SK-N-SH (cell line): ENCODE measurements at regions of chr11 and their contacts with region 1.

Region 1: DNA sequence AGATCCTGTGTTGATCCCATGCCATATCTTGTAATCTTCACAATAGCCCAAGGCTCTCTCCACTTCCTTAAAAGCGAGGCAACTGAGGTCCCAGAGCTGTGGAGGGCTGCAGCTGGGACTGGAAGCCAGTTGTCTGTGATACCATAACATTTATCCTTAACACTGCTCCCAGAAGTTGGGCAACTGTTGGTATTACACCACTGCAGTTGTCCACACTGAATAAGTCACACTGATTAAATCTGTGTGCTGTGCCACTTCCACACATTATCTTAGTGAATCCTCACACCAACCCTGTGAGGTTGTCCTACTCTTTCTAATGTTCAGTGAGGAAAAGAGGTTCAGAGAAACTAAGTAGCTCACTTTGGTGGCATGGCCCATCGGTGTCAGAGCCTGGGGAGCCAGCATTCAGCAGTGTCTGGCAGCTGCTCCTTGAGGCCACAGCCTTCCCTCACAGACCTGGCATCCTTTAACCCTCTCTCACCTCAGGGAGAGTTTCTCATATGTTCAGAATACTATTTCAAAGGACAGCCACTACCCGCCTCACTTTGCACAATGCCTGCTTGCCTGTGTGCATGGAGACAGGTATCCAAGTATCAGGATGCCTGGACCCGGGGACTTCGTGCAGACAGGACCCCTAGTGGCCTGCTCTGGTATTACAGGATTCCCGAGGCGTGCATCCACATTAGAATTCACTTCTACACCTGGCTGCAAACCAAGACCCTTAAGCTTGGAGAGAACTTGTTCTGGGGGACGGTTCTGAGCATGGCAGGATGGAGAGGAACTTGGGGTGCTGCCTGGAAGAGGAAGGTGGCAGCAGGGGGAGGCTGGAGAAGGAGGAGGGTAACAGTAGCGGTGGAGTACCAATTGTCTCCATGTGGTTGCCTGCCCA is 221.9 kb upstream of the TBCEL start:
- DNase-seq: peak; percentile 83
- H3K4me3 ChIP-seq: no peak overlapping the region; a peak in 1 of 4 replicates
- H3K27ac ChIP-seq: no peak overlapping the region
- H3K4me1 ChIP-seq: peaks cover 0 to 18% of the 10 kb centered on the region in 2 experiments; a peak in 1 of 4 replicates
- H3K27me3 ChIP-seq: no peaks in the 10 kb centered on the region
- CTCF ChIP-seq: peak; percentile 80
- EP300 ChIP-seq: no peak
- RAD21 ChIP-seq: peak; percentile 85

Region 2: GRCh38 chr11:120529214-120529613 is 272.8 kb before region 1 on chr11:
- CTCF ChIA-PET with region 1: no interaction called
- POLR2A ChIA-PET with region 1: no interaction called
- DNase-seq: no peak
- H3K4me3 ChIP-seq: no peak overlapping the region
- H3K27ac ChIP-seq: no peak overlapping the region
- H3K4me1 ChIP-seq: peaks cover 0 to 10% of the 10 kb centered on the region in 2 experiments; a peak in 1 of 4 replicates
- H3K27me3 ChIP-seq: peaks cover 10% of the 10 kb centered on the region
- CTCF ChIP-seq: no peak
- EP300 ChIP-seq: no peak
- RAD21 ChIP-seq: no peak

Region 3: GRCh38 chr11:120577041-120577440 is 225.0 kb before region 1 on chr11:
- CTCF ChIA-PET with region 1: no interaction called
- POLR2A ChIA-PET with region 1: no interaction called
- DNase-seq: no peak
- H3K4me3 ChIP-seq: no peak overlapping the region
- H3K27ac ChIP-seq: no peak overlapping the region
- H3K4me1 ChIP-seq: no peaks in the 10 kb centered on the region; a peak in 1 of 4 replicates
- H3K27me3 ChIP-seq: no peaks in the 10 kb centered on the region; the same call in 1 of the 2 replicates
- CTCF ChIP-seq: no peak
- EP300 ChIP-seq: no peak
- RAD21 ChIP-seq: no peak

Region 4: GRCh38 chr11:120710354-120711131 is 91.5 kb before region 1 on chr11:
- CTCF ChIA-PET with region 1: interaction called, 13 read pairs
- POLR2A ChIA-PET with region 1: no interaction called
- DNase-seq: peak; percentile 41
- H3K4me3 ChIP-seq: no peak overlapping the region
- H3K27ac ChIP-seq: no peak overlapping the region
- H3K4me1 ChIP-seq: peaks cover 0 to 17% of the 10 kb centered on the region in 2 experiments; a peak in 1 of 4 replicates
- H3K27me3 ChIP-seq: no peaks in the 10 kb centered on the region; the same call in 1 of the 2 replicates
- CTCF ChIP-seq: no peak
- EP300 ChIP-seq: no peak
- RAD21 ChIP-seq: no peak

Region 5: DNA sequence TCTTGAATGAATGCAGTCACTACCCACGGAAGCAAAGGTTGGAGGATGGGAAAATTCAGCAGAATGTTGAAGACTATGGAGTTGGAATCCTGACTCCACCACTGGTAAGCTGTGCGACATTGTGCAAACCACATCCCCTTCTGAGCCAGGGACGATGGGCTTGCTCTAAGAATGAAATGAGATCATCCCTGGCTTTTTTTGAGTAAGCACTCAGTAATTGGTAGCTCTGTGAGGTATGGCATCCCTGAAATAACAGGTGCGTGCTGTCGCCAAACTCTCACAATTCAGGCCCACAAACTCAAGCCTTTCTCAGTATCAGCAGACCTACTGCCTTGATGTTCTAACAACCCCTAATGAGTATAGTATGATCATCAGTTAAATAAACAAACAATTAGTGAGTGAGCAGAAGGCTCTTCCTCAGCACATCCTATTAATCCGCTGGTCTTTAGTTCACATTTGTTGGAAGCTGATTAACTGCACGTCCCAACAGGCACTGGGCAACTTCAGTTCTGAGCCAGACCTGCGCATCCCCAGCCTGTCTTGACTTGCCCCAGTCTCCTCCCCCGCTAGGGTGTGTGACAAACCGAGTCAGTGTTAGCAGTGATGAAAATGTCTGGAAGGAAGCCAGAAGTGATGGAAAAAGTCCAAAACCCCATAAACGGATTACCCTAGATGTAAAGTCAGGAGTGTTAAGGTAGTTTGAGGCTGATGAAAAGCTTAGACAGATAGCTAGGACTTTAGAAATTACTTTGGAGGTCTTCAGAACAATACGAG is 55.0 kb before region 1 on chr11:
- CTCF ChIA-PET with region 1: interaction called, 10 read pairs
- POLR2A ChIA-PET with region 1: no interaction called
- DNase-seq: peak; percentile 30
- H3K4me3 ChIP-seq: no peak overlapping the region
- H3K27ac ChIP-seq: peak overlapping the region in 1 of 2 experiments; percentile 18; a peak in 1 of 4 replicates
- H3K4me1 ChIP-seq: peaks cover 0 to 59% of the 10 kb centered on the region in 2 experiments; a peak in 3 of 4 replicates
- H3K27me3 ChIP-seq: no peaks in the 10 kb centered on the region
- CTCF ChIP-seq: no peak
- EP300 ChIP-seq: no peak
- RAD21 ChIP-seq: no peak

Region 6: DNA sequence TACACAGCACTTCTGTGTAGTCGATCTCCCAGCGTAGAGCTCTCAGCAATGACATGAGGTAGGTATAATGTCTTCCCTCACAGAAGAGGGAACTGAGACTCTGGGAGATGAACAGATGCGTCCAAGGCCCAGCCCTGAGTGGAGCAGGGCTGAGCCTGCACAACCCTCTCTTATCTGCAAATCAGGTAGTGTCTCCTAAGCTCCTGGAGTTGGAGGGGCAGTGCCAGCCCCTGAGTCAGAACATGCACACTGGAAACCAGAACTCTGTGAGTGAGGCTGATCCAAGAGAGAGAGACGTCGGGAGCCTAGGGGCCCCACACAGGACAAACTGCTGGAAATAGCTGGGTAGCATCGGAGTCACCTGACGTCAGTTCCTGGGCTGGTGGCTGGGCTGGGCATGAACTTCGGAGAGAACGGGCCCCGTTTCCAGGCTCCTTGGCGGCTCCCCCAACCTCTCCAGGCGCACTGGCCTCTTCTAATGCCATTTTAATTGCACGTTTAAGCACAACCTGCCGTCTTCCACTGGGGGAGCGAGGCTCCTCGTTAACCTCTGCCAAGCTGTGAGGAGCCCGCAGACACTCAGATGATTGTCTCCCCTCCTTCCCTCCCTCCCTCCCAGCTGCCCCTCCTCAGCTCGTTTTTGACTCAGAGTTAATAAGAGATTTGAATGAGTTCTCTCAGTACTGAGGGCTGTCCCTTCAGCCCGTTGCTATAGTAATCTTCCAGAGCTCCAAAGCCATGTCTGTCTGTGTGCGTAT is 30.6 kb after region 1 on chr11:
- CTCF ChIA-PET with region 1: interaction called, 13 read pairs
- POLR2A ChIA-PET with region 1: no interaction called
- DNase-seq: no peak
- H3K4me3 ChIP-seq: no peak overlapping the region
- H3K27ac ChIP-seq: no peak overlapping the region
- H3K4me1 ChIP-seq: peaks cover 0 to 29% of the 10 kb centered on the region in 2 experiments; a peak in 1 of 4 replicates
- H3K27me3 ChIP-seq: no peaks in the 10 kb centered on the region
- CTCF ChIP-seq: no peak
- EP300 ChIP-seq: no peak
- RAD21 ChIP-seq: no peak

Region 7: DNA sequence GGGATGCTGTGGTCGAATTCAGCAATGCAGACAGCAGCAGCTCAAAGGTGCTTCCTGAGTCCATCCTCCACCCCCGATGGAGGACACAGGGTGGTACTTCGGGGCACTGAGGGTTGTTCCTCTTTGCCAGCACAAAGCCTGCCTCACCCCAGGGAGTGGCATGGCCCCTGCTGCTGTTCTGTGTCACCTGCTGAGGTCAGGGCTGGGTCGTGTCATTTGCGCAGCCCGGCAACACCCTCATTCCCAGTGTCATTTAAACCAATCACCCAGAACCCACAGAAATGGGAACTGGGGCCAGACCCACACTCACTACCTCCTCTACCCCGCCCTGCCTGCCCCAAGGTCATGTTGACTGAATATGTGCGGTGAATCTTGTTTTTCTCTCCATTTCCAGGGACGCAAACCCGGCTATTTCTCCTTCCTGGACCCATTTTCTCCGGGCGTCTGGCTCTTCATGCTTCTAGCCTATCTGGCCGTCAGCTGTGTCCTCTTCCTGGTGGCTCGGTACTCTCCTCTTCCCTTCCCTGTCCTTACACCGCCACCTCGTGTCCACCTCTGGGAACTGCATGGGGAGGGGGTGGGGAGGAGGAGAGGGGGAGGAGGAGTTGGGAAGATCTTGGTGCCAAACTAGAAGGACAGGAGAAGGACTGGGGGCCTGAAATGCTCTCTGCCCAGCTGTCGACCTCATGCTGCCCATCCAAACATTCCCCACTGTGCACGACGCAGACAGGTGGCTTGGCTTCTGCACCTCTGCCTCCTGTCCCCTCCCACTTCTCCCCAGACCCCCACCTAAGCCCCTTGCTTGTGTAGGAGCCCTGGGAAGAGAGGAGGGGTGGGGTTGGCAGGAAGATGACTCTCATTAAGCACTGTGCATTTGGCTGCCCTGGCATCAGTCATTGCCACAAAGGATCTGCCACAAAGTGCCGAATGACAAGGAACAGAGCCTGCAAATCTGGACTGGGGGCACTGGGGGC is 150.7 kb after region 1 on chr11:
- CTCF ChIA-PET with region 1: interaction called, 10 read pairs
- POLR2A ChIA-PET with region 1: no interaction called
- DNase-seq: peak; percentile 89
- H3K4me3 ChIP-seq: peak overlapping the region in 1 of 2 experiments; percentile 54; a peak in 1 of 4 replicates
- H3K27ac ChIP-seq: peak overlapping the region in 1 of 2 experiments; percentile 62; a peak in 2 of 4 replicates
- H3K4me1 ChIP-seq: peaks cover 0 to 34% of the 10 kb centered on the region in 2 experiments; a peak in 1 of 4 replicates
- H3K27me3 ChIP-seq: no peaks in the 10 kb centered on the region; the same call in 1 of the 2 replicates
- CTCF ChIP-seq: peak; percentile 73
- EP300 ChIP-seq: no peak
- RAD21 ChIP-seq: peak; percentile 93